H1 (cell line): ENCODE measurements at regions of chr4 and their contacts with region 1.

Region 1: DNA sequence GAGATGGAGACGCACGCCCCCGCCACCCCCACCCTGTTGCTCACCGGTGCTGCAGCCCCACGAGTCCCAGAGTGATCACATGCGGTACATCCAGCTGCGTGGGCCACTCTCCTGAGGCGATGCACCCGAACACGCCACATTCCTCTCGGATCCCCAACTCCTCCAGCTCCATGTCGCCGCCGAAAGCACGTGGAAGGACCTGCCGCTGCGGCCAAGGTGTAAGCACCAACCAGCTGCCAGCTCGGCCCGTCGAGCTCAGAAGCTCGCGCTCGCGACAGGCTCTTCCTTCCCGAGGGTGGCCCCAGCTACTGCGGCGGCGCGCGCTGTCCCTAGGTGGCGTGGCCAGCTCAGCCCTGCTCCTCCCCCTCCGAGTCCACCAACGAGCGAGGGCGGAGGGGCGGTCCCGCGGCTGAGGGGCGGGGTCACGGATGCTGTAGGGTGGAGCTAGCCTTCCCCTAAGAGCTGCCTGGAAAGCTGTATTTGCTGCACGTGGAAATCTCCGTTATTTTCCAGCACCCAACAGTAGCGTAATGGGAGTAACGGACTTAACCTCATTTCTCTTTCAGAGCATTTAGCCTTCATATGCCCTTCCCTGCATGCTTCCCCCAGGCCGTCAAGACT is at the start of gene PPAT:
- DNase-seq: peak; percentile 95 to 99
- H3K4me3 ChIP-seq: peak within 1 kb of the TSS; percentile 87 to 96 (median 90)
- H3K27ac ChIP-seq: peak within 1 kb of the TSS; percentile 92
- H3K4me1 ChIP-seq: peaks cover 0 to 2% (median 1%) of the 10 kb centered on the region in 4 experiments; a peak in 5 of 7 replicates
- H3K27me3 ChIP-seq: no peaks in the 10 kb centered on the region
- CTCF ChIP-seq: peak in 2 of 3 experiments; percentile 7 to 30; a peak in 2 of 4 replicates
- EP300 ChIP-seq: peak in 1 of 2 experiments; percentile 88; a peak in 2 of 3 replicates
- POLR2A ChIP-seq: peak; percentile 85 to 90
- RAD21 ChIP-seq: no peak
- total RNA-seq, gene PPAT: 98.4 and 104 TPM in 2 replicates

Region 2: GRCh38 chr4:56387023-56388001 is 48.1 kb before region 1 on chr4 and contains the start of gene AASDH:
- CTCF ChIA-PET with region 1: interaction called, 4 read pairs
- POLR2A ChIA-PET with region 1: interaction called, 75 read pairs
- DNase-seq: peak; percentile 79 to 99
- H3K4me3 ChIP-seq: peak within 1 kb of the TSS; percentile 69 to 94 (median 88)
- H3K27ac ChIP-seq: peak within 1 kb of the TSS; percentile 98
- H3K4me1 ChIP-seq: peaks cover 0 to 5% (median 0%) of the 10 kb centered on the region in 4 experiments; a peak in 1 of 7 replicates
- H3K27me3 ChIP-seq: no peaks in the 10 kb centered on the region
- CTCF ChIP-seq: no peak
- EP300 ChIP-seq: no peak
- POLR2A ChIP-seq: peak; percentile 95 to 99
- RAD21 ChIP-seq: no peak; a peak in 1 of 4 replicates
- total RNA-seq, gene AASDH: 10.9 and 13.3 TPM in 2 replicates

Region 3: GRCh38 chr4:56410235-56411062 is 25.0 kb before region 1 on chr4:
- CTCF ChIA-PET with region 1: interaction called, 3 read pairs
- POLR2A ChIA-PET with region 1: interaction called, 36 read pairs
- DNase-seq: peak in 1 of 2 experiments; percentile 36
- H3K4me3 ChIP-seq: peak overlapping the region in 1 of 4 experiments; percentile 30; a peak in 1 of 8 replicates
- H3K27ac ChIP-seq: peak overlapping the region; percentile 64
- H3K4me1 ChIP-seq: peaks cover 0 to 16% (median 2%) of the 10 kb centered on the region in 4 experiments; a peak in 3 of 7 replicates
- H3K27me3 ChIP-seq: no peaks in the 10 kb centered on the region
- CTCF ChIP-seq: no peak
- EP300 ChIP-seq: peak in 1 of 2 experiments; percentile 86; a peak in 1 of 3 replicates
- POLR2A ChIP-seq: peak in 1 of 2 experiments; percentile 51; a peak in 2 of 3 replicates
- RAD21 ChIP-seq: no peak

Region 4: DNA sequence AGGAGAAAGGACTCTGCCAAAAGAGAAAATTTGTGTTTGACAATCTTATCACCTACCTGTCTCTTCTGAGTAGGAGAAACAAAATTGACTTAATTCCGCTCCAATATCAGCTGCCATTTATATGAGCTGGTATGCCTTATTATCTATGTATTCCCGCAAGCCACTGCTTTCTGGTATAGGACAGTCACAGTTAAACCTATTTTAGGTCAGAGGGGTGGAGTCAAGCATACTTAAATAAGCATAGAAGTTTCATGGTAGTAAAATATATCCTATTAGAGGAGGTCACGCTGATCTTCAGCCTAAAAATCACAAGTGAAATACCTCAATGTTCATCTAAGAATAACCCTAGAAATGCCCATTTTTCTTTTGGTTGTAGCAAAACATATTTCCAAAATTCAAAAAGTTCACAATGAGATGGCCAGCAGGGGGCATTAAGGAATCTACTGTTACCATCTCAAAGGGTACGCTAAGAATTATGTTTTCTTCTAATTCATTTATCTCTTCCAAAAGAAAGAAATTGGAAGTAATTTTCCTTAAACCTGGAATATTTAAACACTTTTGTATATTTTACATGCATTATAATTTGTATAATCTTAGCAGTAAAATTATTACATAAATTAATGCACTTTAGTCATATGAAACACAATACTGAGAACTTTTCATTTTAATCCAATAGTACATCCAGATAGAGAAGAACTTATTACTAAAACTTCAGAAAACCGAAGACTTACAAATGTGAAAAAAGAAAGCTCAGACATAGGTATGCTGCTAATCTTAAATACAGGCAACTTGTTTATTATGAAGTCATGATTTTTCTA is 10.5 kb before region 1 on chr4:
- CTCF ChIA-PET with region 1: interaction called, 16 read pairs
- POLR2A ChIA-PET with region 1: interaction called, 96 read pairs
- DNase-seq: no peak
- H3K4me3 ChIP-seq: peak overlapping the region in 1 of 4 experiments; percentile 40; a peak in 1 of 8 replicates
- H3K27ac ChIP-seq: no peak overlapping the region
- H3K4me1 ChIP-seq: peaks cover 0 to 4% (median 0%) of the 10 kb centered on the region in 4 experiments; a peak in 2 of 7 replicates
- H3K27me3 ChIP-seq: no peaks in the 10 kb centered on the region
- CTCF ChIP-seq: no peak
- EP300 ChIP-seq: no peak
- POLR2A ChIP-seq: no peak
- RAD21 ChIP-seq: no peak

Region 5: GRCh38 chr4:56448301-56448700 is 12.9 kb after region 1 on chr4:
- CTCF ChIA-PET with region 1: no interaction called
- POLR2A ChIA-PET with region 1: interaction called, 11 read pairs
- DNase-seq: no peak
- H3K4me3 ChIP-seq: no peak overlapping the region
- H3K27ac ChIP-seq: no peak overlapping the region
- H3K4me1 ChIP-seq: no peaks in the 10 kb centered on the region
- H3K27me3 ChIP-seq: no peaks in the 10 kb centered on the region
- CTCF ChIP-seq: no peak
- EP300 ChIP-seq: no peak
- POLR2A ChIP-seq: no peak
- RAD21 ChIP-seq: no peak

Region 6: GRCh38 chr4:56467284-56468096 is 32.1 kb after region 1 on chr4 and contains the start of gene SRP72:
- CTCF ChIA-PET with region 1: no interaction called
- POLR2A ChIA-PET with region 1: interaction called, 121 read pairs
- DNase-seq: peak; percentile 46 to 85
- H3K4me3 ChIP-seq: peak within 1 kb of the TSS; percentile 88 to 99 (median 96)
- H3K27ac ChIP-seq: peak within 1 kb of the TSS; percentile 84
- H3K4me1 ChIP-seq: peaks cover 0 to 5% (median 2%) of the 10 kb centered on the region in 4 experiments; a peak in 1 of 7 replicates
- H3K27me3 ChIP-seq: no peaks in the 10 kb centered on the region
- CTCF ChIP-seq: no peak
- EP300 ChIP-seq: no peak
- POLR2A ChIP-seq: peak; percentile 61 to 86
- RAD21 ChIP-seq: no peak
- total RNA-seq, gene SRP72: 139 and 144 TPM in 2 replicates

Region 7: GRCh38 chr4:56698329-56698728 is 262.9 kb after region 1 on chr4:
- CTCF ChIA-PET with region 1: no interaction called
- POLR2A ChIA-PET with region 1: no interaction called
- DNase-seq: no peak
- H3K4me3 ChIP-seq: no peak overlapping the region
- H3K27ac ChIP-seq: no peak overlapping the region
- H3K4me1 ChIP-seq: 0 out of 7 replicates have a peak, but pooled peaks cover 0 to 2% (median 0%) of the 10 kb centered on the region in 4 experiments
- H3K27me3 ChIP-seq: no peaks in the 10 kb centered on the region; a peak in 1 of 7 replicates
- CTCF ChIP-seq: no peak
- EP300 ChIP-seq: no peak
- POLR2A ChIP-seq: no peak
- RAD21 ChIP-seq: no peak

Region 8: GRCh38 chr4:56977321-56978012 is 542.1 kb after region 1 on chr4 and contains the start of gene NOA1:
- CTCF ChIA-PET with region 1: no interaction called
- POLR2A ChIA-PET with region 1: interaction called, 15 read pairs
- DNase-seq: peak; percentile 96 to 98
- H3K4me3 ChIP-seq: peak within 1 kb of the TSS; percentile 85 to 92 (median 90)
- H3K27ac ChIP-seq: peak within 1 kb of the TSS; percentile 40
- H3K4me1 ChIP-seq: peaks cover 0 to 4% (median 0%) of the 10 kb centered on the region in 4 experiments; a peak in 3 of 7 replicates
- H3K27me3 ChIP-seq: no peaks in the 10 kb centered on the region; a peak in 1 of 7 replicates
- CTCF ChIP-seq: no peak
- EP300 ChIP-seq: no peak
- POLR2A ChIP-seq: peak in 1 of 2 experiments; percentile 87; a peak in 2 of 3 replicates
- RAD21 ChIP-seq: no peak
- total RNA-seq, gene NOA1: 28.1 and 28.5 TPM in 2 replicates